Activated CD8-positive, alpha-beta T cell treated with anti-CD3 and anti-CD28 coated beads for 36 hours (primary cell): ENCODE measurements at regions of chr22 and their contacts with region 1.

Region 1: DNA sequence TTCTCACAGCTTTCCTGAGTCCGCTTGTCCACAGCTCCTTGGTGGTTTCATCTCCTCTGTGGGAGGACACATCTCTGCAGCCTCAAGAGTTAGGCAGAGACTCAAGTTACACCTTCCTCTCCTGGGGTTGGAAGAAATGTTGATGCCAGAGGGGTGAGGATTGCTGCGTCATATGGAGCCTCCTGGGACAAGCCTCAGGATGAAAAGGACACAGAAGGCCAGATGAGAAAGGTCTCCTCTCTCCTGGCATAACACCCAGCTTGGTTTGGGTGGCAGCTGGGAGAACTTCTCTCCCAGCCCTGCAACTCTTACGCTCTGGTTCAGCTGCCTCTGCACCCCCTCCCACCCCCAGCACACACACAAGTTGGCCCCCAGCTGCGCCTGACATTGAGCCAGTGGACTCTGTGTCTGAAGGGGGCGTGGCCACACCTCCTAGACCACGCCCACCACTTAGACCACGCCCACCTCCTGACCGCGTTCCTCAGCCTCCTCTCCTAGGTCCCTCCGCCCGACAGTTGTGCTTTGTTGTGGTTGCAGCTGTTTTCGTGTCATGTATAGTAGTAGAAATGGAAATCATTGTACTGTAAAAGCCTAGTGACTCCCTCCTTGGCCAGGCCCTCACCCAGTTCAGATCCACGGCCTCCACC is 11.7 kb downstream of the RASD2 start:
- DNase-seq: peak; percentile 93
- ATAC-seq: peak; percentile 96
- H3K4me3 Mint-ChIP-seq: no peak overlapping the region
- H3K27ac Mint-ChIP-seq: no peak overlapping the region
- H3K4me1 Mint-ChIP-seq: peaks cover 11% of the 10 kb centered on the region
- H3K27me3 Mint-ChIP-seq: no peaks in the 10 kb centered on the region
- CTCF ChIP-seq: no peak

Region 2: GRCh38 chr22:35524966-35525686 is 27.2 kb before region 1 on chr22:
- CTCF ChIA-PET with region 1: no interaction called
- POLR2A ChIA-PET with region 1: no interaction called
- intact Hi-C with region 1: no loop called
- DNase-seq: no peak
- ATAC-seq: no peak
- H3K4me3 Mint-ChIP-seq: no peak overlapping the region
- H3K27ac Mint-ChIP-seq: no peak overlapping the region
- H3K4me1 Mint-ChIP-seq: no peaks in the 10 kb centered on the region
- H3K27me3 Mint-ChIP-seq: peaks cover 10% of the 10 kb centered on the region
- CTCF ChIP-seq: no peak

Region 3: GRCh38 chr22:35539910-35540594 is 12.3 kb before region 1 on chr22:
- CTCF ChIA-PET with region 1: interaction called, 13 read pairs
- POLR2A ChIA-PET with region 1: interaction called, 13 read pairs
- intact Hi-C with region 1: no loop called
- DNase-seq: peak; percentile 65
- ATAC-seq: peak; percentile 90
- H3K4me3 Mint-ChIP-seq: peak overlapping the region; percentile 70
- H3K27ac Mint-ChIP-seq: no peak overlapping the region
- H3K4me1 Mint-ChIP-seq: peaks cover 9% of the 10 kb centered on the region
- H3K27me3 Mint-ChIP-seq: peaks cover 26% of the 10 kb centered on the region
- CTCF ChIP-seq: no peak